ENCODE measurements at regions of chr2 and their contacts with region 1.

Region 1: DNA sequence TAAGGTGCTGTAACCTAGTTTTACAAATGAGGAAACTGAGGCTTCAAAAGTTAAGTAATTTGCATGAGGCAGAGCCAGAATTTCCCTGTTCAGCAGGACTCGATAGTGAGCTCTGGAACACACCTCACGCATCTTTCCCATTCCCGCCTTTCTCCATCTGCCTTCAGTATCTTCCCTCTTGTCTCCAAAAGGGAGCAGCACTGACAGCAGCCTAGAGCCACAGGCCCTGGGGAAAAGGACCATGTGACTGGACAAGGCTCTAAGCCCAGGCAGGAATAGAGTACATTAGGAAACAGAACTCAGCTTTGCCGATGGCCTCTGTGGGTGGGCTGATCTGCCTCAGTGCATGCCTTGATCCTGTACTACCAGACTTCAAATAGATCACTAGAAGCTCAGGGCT is 21.5 kb downstream of the GPR155 start:
- DNase-seq: no peak
- H3K4me3 ChIP-seq: no peak overlapping the region
- H3K27ac ChIP-seq: no peak overlapping the region
- H3K4me1 ChIP-seq: peaks cover 0 to 2% of the 10 kb centered on the region in 2 experiments; a peak in 2 of 4 replicates
- H3K27me3 ChIP-seq: no peaks in the 10 kb centered on the region
- CTCF ChIP-seq: no peak
- EP300 ChIP-seq: no peak
- RAD21 ChIP-seq: no peak; the same call in 1 of the 2 replicates

Region 2: DNA sequence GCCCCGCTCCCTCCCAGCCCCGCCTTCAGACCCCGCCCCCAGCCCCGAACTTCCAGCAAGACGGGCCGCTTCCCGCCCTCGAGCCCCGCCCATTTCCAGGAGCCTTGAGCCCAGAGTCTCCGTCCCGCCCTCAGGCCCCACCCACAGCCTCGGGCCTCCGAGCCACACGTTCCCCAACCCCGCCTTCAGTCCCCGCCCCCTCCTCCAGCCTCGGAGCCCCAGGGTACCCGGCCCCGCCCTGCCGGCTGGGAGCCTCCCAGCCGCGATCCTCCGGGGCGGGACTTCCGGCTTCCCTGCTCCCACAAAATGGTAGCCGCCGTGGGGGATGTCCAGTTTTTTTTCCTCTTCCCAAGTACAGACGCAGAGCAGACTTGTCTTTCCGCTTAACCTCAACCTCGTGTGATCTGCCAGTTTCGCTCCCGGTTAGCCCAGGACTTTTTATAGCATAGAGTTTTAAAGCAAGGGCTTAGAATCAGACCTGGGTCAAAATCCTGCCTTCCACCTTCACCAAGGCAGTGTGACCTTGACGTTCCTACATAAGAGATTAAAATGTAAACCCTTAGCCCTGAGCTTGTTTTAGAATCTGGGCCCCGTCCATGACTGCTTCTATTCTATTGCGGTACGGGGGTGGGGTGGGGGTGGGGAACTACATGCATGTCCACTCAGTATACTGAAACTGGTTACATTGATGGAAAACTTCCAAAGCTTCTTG is 21.9 kb after region 1 on chr2:
- CTCF ChIA-PET with region 1: interaction called, 24 read pairs
- POLR2A ChIA-PET with region 1: no interaction called
- DNase-seq: peak; percentile 98
- H3K4me3 ChIP-seq: peak overlapping the region; percentile 93 to 95
- H3K27ac ChIP-seq: peak overlapping the region; percentile 72 to 95
- H3K4me1 ChIP-seq: peaks cover 4 to 7% of the 10 kb centered on the region in 2 experiments; a peak in 2 of 4 replicates
- H3K27me3 ChIP-seq: no peaks in the 10 kb centered on the region
- CTCF ChIP-seq: no peak
- EP300 ChIP-seq: no peak
- RAD21 ChIP-seq: no peak

Region 3: GRCh38 chr2:174536304-174536703 is 71.0 kb after region 1 on chr2:
- CTCF ChIA-PET with region 1: interaction called, 34 read pairs
- POLR2A ChIA-PET with region 1: no interaction called
- DNase-seq: peak; percentile 78
- H3K4me3 ChIP-seq: no peak overlapping the region
- H3K27ac ChIP-seq: peak overlapping the region in 1 of 2 experiments; percentile 82; a peak in 2 of 4 replicates
- H3K4me1 ChIP-seq: peaks cover 0 to 22% of the 10 kb centered on the region in 2 experiments; a peak in 2 of 4 replicates
- H3K27me3 ChIP-seq: no peaks in the 10 kb centered on the region
- CTCF ChIP-seq: no peak
- EP300 ChIP-seq: peak in 1 of 2 experiments; percentile 95; a peak in 2 of 4 replicates
- RAD21 ChIP-seq: no peak; the same call in 1 of the 2 replicates

Region 4: GRCh38 chr2:174561283-174561971 is 96.1 kb after region 1 on chr2:
- CTCF ChIA-PET with region 1: interaction called, 14 read pairs
- POLR2A ChIA-PET with region 1: no interaction called
- DNase-seq: no peak
- H3K4me3 ChIP-seq: no peak overlapping the region
- H3K27ac ChIP-seq: no peak overlapping the region; a peak in 1 of 4 replicates
- H3K4me1 ChIP-seq: peaks cover 0 to 2% of the 10 kb centered on the region in 2 experiments; a peak in 1 of 4 replicates
- H3K27me3 ChIP-seq: no peaks in the 10 kb centered on the region
- CTCF ChIP-seq: no peak
- EP300 ChIP-seq: no peak
- RAD21 ChIP-seq: no peak

Region 5: GRCh38 chr2:174682578-174683391 is 217.5 kb after region 1 on chr2:
- CTCF ChIA-PET with region 1: interaction called, 58 read pairs
- POLR2A ChIA-PET with region 1: interaction called, 4 read pairs
- DNase-seq: peak; percentile 95
- H3K4me3 ChIP-seq: peak overlapping the region; percentile 89 to 93
- H3K27ac ChIP-seq: peak overlapping the region; percentile 72 to 89
- H3K4me1 ChIP-seq: peaks cover 6 to 47% of the 10 kb centered on the region in 2 experiments; a peak in 2 of 4 replicates
- H3K27me3 ChIP-seq: no peaks in the 10 kb centered on the region
- CTCF ChIP-seq: 0 out of 2 replicates have a peak, but pooled peaks have one; percentile 6
- EP300 ChIP-seq: 0 out of 4 replicates have a peak, but pooled peaks of 1 of the 2 experiments have one; percentile 11
- RAD21 ChIP-seq: no peak

Measured in SK-N-SH (cell line).